ENCODE measurements at regions of chr19 and their contacts with region 1.

Region 1: DNA sequence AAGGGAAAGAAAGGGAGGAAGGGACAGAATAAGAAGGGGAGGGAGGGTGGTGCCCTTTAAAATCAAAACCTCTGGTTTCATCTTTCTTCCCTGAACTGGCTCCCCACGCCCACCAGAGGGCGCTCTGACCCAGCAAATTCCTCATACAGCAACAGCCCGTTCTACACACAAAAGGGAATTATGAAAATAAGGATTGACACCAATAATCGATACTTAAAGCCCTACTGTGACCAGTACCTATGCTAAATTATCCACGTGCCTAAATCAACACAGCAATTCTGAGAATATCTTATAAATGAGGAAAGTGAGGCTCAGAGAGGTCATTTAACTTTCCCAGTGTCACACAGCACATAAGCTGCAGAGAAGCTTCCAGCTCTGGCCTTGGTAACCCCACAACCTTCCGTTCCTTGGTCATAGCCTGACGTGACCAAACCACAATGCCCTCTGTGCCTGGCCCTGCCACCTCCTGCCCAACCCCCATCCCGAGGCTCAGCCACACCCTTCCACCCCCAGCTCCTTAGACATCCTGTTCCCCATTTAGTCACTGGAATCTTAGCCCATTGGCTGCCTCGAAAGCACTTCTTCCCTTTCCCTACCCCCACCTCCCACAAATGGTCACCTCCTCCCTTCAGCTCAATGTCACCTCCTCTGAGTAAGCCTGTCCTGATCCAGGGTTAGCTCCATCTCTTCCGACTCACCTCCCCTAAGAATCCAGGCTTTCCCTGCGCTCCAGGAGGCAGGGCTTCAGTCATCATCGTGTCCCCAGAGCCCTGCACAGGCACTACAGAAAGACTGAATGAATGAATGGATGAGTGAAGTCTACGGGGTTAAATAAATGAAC is 34.2 kb upstream of the PNMA8B start:
- DNase-seq: peak; percentile 79
- ATAC-seq: peak; percentile 68
- H3K4me3 Mint-ChIP-seq: no peak overlapping the region
- H3K27ac Mint-ChIP-seq: peak overlapping the region; percentile 51
- H3K4me1 Mint-ChIP-seq: peaks cover 12% of the 10 kb centered on the region
- H3K27me3 Mint-ChIP-seq: no peaks in the 10 kb centered on the region
- CTCF ChIP-seq: peak; percentile 99

Region 2: GRCh38 chr19:46542428-46543230 is 12.8 kb after region 1 on chr19:
- CTCF ChIA-PET with region 1: interaction called, 219 read pairs
- POLR2A ChIA-PET with region 1: interaction called, 3 read pairs
- intact Hi-C with region 1: no loop called
- DNase-seq: peak; percentile 96
- ATAC-seq: peak; percentile 72
- H3K4me3 Mint-ChIP-seq: no peak overlapping the region
- H3K27ac Mint-ChIP-seq: no peak overlapping the region
- H3K4me1 Mint-ChIP-seq: peaks cover 2% of the 10 kb centered on the region
- H3K27me3 Mint-ChIP-seq: peaks cover under 1% of the 10 kb centered on the region
- CTCF ChIP-seq: peak; percentile 91